Activated naive CD4-positive, alpha-beta T cell treated with anti-CD3 and anti-CD28 coated beads for 36 hours (primary cell): ENCODE measurements at regions of chr3 and their contacts with region 1.

Region 1: GRCh38 chr3:47961815-47962618 is 54.2 kb downstream of the MAP4 start:
- DNase-seq: peak; percentile 41
- H3K4me3 Mint-ChIP-seq: no peak overlapping the region
- H3K27ac Mint-ChIP-seq: no peak overlapping the region
- H3K4me1 Mint-ChIP-seq: peaks cover 19% of the 10 kb centered on the region
- H3K27me3 Mint-ChIP-seq: no peaks in the 10 kb centered on the region

Region 2: GRCh38 chr3:46266598-46266997 is 1695.4 kb before region 1 on chr3:
- CTCF ChIA-PET with region 1: no interaction called
- intact Hi-C with region 1: no loop called
- DNase-seq: no peak
- H3K4me3 Mint-ChIP-seq: no peak overlapping the region
- H3K27ac Mint-ChIP-seq: no peak overlapping the region
- H3K4me1 Mint-ChIP-seq: peaks cover 11% of the 10 kb centered on the region
- H3K27me3 Mint-ChIP-seq: peaks cover 16% of the 10 kb centered on the region

Region 3: GRCh38 chr3:47890828-47891612 is 71.0 kb before region 1 on chr3:
- CTCF ChIA-PET with region 1: no interaction called
- intact Hi-C with region 1: loop called (anchors 10 kb)
- DNase-seq: no peak
- H3K4me3 Mint-ChIP-seq: no peak overlapping the region
- H3K27ac Mint-ChIP-seq: no peak overlapping the region
- H3K4me1 Mint-ChIP-seq: no peaks in the 10 kb centered on the region
- H3K27me3 Mint-ChIP-seq: no peaks in the 10 kb centered on the region

Region 4: GRCh38 chr3:48151058-48151806 is 189.2 kb after region 1 on chr3:
- CTCF ChIA-PET with region 1: no interaction called
- intact Hi-C with region 1: no loop called
- DNase-seq: peak; percentile 75
- H3K4me3 Mint-ChIP-seq: no peak overlapping the region
- H3K27ac Mint-ChIP-seq: no peak overlapping the region
- H3K4me1 Mint-ChIP-seq: no peaks in the 10 kb centered on the region
- H3K27me3 Mint-ChIP-seq: no peaks in the 10 kb centered on the region